A673 (cell line): ENCODE measurements at regions of chr6 and their contacts with region 1.

Region 1: DNA sequence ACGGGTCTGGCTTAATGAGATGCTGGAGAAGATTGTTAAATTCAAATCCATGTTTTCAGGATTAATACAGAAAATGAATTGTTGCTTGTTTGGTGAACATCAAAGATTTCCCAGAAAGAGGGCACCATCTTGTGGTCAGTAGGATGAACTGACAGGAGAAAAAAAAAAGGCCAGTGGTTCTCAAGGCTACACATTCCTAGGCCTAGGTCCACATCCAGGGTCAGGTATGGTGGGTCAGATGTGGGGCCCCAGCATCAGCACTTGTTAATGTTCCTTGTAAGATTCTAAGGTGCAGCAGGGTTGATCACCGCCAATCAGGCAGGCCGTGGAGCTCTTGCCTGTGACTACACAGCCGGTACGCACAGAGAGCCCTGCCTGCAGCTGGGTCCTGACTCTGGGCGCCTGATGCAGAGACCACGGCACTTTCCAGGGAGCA is 34.0 kb upstream of the FOXO3 start:
- DNase-seq: peak; percentile 52
- H3K4me3 ChIP-seq: no peak overlapping the region
- H3K27ac ChIP-seq: no peak overlapping the region
- H3K4me1 ChIP-seq: no peaks in the 10 kb centered on the region
- H3K27me3 ChIP-seq: no peaks in the 10 kb centered on the region
- CTCF ChIP-seq: peak; percentile 82

Region 2: GRCh38 chr6:107982486-107982885 is 544.3 kb before region 1 on chr6:
- CTCF ChIA-PET with region 1: no interaction called
- POLR2A ChIA-PET with region 1: no interaction called
- intact Hi-C with region 1: loop called (anchors 5 kb)
- DNase-seq: no peak
- H3K4me3 ChIP-seq: no peak overlapping the region
- H3K27ac ChIP-seq: no peak overlapping the region
- H3K4me1 ChIP-seq: no peaks in the 10 kb centered on the region
- H3K27me3 ChIP-seq: peaks cover 14% of the 10 kb centered on the region
- CTCF ChIP-seq: no peak